H1 (cell line): ENCODE measurements at regions of chr17 and their contacts with region 1.

Region 1: GRCh38 chr17:63434876-63435684 is 11.0 kb downstream of the CYB561 start:
- DNase-seq: no peak
- H3K4me3 ChIP-seq: no peak overlapping the region
- H3K27ac ChIP-seq: no peak overlapping the region
- H3K4me1 ChIP-seq: peaks cover 0 to 18% (median 6%) of the 10 kb centered on the region in 4 experiments; a peak in 5 of 7 replicates
- H3K27me3 ChIP-seq: no peaks in the 10 kb centered on the region
- CTCF ChIP-seq: peak; percentile 37 to 68 (median 66); a peak in 3 of 4 replicates
- EP300 ChIP-seq: no peak
- POLR2A ChIP-seq: no peak
- RAD21 ChIP-seq: peak; percentile 32 to 49

Region 2: GRCh38 chr17:63455417-63455816 is 20.3 kb after region 1 on chr17:
- CTCF ChIA-PET with region 1: interaction called, 758 read pairs
- POLR2A ChIA-PET with region 1: interaction called, 3 read pairs
- DNase-seq: no peak
- H3K4me3 ChIP-seq: no peak overlapping the region
- H3K27ac ChIP-seq: no peak overlapping the region
- H3K4me1 ChIP-seq: peaks cover 0 to 3% (median 0%) of the 10 kb centered on the region in 4 experiments; a peak in 1 of 7 replicates
- H3K27me3 ChIP-seq: no peaks in the 10 kb centered on the region; a peak in 1 of 7 replicates
- CTCF ChIP-seq: no peak
- EP300 ChIP-seq: no peak
- POLR2A ChIP-seq: no peak
- RAD21 ChIP-seq: no peak

Region 3: DNA sequence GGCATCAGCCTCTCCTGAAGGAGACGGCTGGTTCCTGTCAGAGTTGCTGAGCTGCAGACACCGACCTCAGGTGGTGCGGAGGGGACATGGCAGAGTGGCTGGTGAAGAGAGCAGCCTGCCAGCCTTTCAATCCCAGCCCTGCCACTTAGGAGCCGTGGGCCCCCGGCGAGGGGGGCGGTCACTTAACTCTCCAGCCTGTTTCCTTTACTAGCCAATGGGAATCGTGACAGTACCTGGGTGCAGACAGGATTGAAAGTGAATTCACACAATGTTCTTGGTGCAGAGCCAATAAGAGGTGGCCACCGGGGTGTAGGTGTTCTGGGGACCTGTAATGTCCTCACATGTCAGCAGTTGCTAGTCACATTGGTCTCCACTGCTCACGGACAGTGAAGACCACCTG is 55.2 kb after region 1 on chr17:
- CTCF ChIA-PET with region 1: interaction called, 30 read pairs
- POLR2A ChIA-PET with region 1: no interaction called
- DNase-seq: no peak
- H3K4me3 ChIP-seq: no peak overlapping the region
- H3K27ac ChIP-seq: no peak overlapping the region
- H3K4me1 ChIP-seq: peaks cover 0 to 3% (median 0%) of the 10 kb centered on the region in 4 experiments; a peak in 1 of 7 replicates
- H3K27me3 ChIP-seq: peaks cover 0 to 4% (median 0%) of the 10 kb centered on the region in 4 experiments; a peak in 1 of 7 replicates
- CTCF ChIP-seq: peak; percentile 8 to 44 (median 41); a peak in 3 of 4 replicates
- EP300 ChIP-seq: no peak
- POLR2A ChIP-seq: no peak
- RAD21 ChIP-seq: peak; percentile 30 to 33

Region 4: GRCh38 chr17:63529711-63530556 is 94.9 kb after region 1 on chr17:
- CTCF ChIA-PET with region 1: interaction called, 16 read pairs
- POLR2A ChIA-PET with region 1: no interaction called
- DNase-seq: no peak
- H3K4me3 ChIP-seq: no peak overlapping the region
- H3K27ac ChIP-seq: no peak overlapping the region
- H3K4me1 ChIP-seq: peaks cover 0 to 4% (median 1%) of the 10 kb centered on the region in 4 experiments; a peak in 3 of 7 replicates
- H3K27me3 ChIP-seq: no peaks in the 10 kb centered on the region
- CTCF ChIP-seq: no peak
- EP300 ChIP-seq: no peak
- POLR2A ChIP-seq: no peak
- RAD21 ChIP-seq: no peak

Region 5: GRCh38 chr17:63571763-63572271 is 136.7 kb after region 1 on chr17:
- CTCF ChIA-PET with region 1: interaction called, 11 read pairs
- POLR2A ChIA-PET with region 1: no interaction called
- DNase-seq: no peak
- H3K4me3 ChIP-seq: no peak overlapping the region
- H3K27ac ChIP-seq: no peak overlapping the region
- H3K4me1 ChIP-seq: no peaks in the 10 kb centered on the region; a peak in 1 of 7 replicates
- H3K27me3 ChIP-seq: no peaks in the 10 kb centered on the region
- CTCF ChIP-seq: no peak
- EP300 ChIP-seq: no peak
- POLR2A ChIP-seq: no peak
- RAD21 ChIP-seq: no peak